IMR-90 (cell line): ENCODE measurements at regions of chr2 and their contacts with region 1.

Region 1: GRCh38 chr2:226799181-226799975 is at the start of gene IRS1:
- DNase-seq: peak; percentile 79
- ATAC-seq: peak; percentile 40
- H3K4me3 ChIP-seq: peak within 1 kb of the TSS; percentile 78
- H3K27ac ChIP-seq: peak within 1 kb of the TSS; percentile 97
- H3K4me1 ChIP-seq: peaks cover 2% of the 10 kb centered on the region; the same call in 1 of the 2 replicates
- H3K27me3 ChIP-seq: no peaks in the 10 kb centered on the region
- CTCF ChIP-seq: peak; percentile 62
- POLR2A ChIP-seq: no peak
- RAD21 ChIP-seq: peak; percentile 53
- total RNA-seq, gene IRS1: 21.1 and 29.4 TPM in 2 replicates

Region 2: DNA sequence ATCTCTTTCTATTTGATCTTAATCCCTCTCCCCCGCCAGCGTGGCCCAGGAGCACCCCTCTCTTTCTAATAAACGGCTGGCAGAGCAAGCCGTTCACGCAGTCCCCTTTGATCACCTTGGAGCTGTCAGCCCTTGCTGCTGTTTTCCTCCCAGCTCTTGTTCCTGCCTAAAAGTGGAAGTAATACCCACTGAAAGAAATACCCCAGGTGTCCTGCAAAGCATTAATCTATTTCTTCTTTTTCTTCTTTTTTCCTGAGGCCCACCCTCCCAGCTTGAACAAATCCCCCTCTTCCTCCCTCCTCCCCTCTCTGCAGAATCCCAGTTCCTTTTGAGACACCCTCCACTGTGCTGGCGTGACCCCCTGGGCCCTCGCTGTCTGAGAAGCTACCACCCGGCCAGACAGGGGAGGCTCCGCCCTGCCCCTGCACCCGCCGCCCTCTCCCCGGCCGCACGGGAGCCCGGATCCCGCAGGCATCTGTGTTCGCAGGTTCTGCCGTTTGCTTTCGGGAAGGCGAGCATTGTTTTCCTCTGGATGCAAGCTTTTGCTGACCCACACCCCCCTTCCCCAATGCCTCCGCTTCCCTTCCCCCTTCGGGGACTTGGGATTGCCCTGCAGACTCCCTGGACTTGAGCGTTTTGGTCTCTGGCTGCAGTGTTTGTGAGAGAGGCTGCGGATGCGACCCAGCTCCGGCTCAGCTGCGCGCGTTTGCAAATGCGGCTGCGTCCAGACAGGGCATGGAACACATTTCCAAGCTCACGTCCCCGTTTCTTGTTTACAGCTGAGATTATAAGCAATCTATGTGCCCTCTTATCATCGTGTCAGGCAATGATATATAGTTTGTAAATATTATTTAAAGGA is 768.4 kb before region 1 on chr2:
- CTCF ChIA-PET with region 1: interaction called, 3 read pairs
- POLR2A ChIA-PET with region 1: no interaction called
- dilution Hi-C with region 1: no loop called
- in situ Hi-C with region 1: no loop called
- intact Hi-C with region 1: loop called (anchors 2 kb)
- DNase-seq: peak; percentile 69
- ATAC-seq: peak; percentile 92
- H3K4me3 ChIP-seq: peak overlapping the region; percentile 52
- H3K27ac ChIP-seq: peak overlapping the region; percentile 89
- H3K4me1 ChIP-seq: peaks cover 6% of the 10 kb centered on the region
- H3K27me3 ChIP-seq: no peaks in the 10 kb centered on the region
- CTCF ChIP-seq: no peak
- POLR2A ChIP-seq: no peak
- RAD21 ChIP-seq: peak; percentile 33

Region 3: DNA sequence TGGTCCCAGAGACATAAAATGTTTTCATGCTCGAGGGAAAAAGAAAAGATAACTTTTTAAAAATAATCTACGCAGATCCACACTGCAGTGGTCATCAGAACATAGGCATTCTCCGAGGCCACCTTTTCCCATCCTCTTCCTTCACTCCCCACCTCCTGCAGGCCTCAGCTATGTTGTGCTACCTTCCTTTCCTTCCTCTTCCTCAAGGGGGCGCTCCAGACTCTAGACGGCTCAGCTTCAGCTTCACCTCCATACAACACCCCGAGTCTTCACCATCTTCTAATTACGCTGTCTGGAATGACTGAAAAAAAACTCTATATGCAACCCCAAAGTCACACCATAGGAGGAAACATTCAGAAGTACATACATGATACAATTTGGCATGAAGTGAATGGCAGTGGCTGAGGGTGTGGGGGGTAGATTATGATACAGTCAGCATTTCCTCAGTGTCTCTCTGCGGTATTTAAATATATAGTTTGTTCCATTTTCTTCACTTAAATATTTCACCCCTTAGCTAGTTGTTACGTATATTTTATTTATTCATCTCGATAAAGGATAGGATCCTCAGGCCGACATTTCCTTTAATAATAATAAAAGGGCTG is 583.4 kb before region 1 on chr2:
- CTCF ChIA-PET with region 1: interaction called, 3 read pairs
- POLR2A ChIA-PET with region 1: interaction called, 3 read pairs
- dilution Hi-C with region 1: no loop called
- in situ Hi-C with region 1: no loop called
- intact Hi-C with region 1: loop called (anchors 1 kb)
- DNase-seq: peak; percentile 54
- ATAC-seq: peak; percentile 64
- H3K4me3 ChIP-seq: no peak overlapping the region
- H3K27ac ChIP-seq: no peak overlapping the region
- H3K4me1 ChIP-seq: peaks cover 8% of the 10 kb centered on the region
- H3K27me3 ChIP-seq: no peaks in the 10 kb centered on the region
- CTCF ChIP-seq: peak; percentile 68
- POLR2A ChIP-seq: no peak
- RAD21 ChIP-seq: peak; percentile 74

Region 4: GRCh38 chr2:226733189-226733858 is 66.1 kb before region 1 on chr2:
- CTCF ChIA-PET with region 1: interaction called, 3 read pairs
- POLR2A ChIA-PET with region 1: interaction called, 11 read pairs
- dilution Hi-C with region 1: no loop called
- in situ Hi-C with region 1: no loop called
- intact Hi-C with region 1: no loop called
- DNase-seq: no peak
- ATAC-seq: no peak
- H3K4me3 ChIP-seq: no peak overlapping the region
- H3K27ac ChIP-seq: no peak overlapping the region
- H3K4me1 ChIP-seq: peaks cover 9% of the 10 kb centered on the region
- H3K27me3 ChIP-seq: no peaks in the 10 kb centered on the region
- CTCF ChIP-seq: no peak
- POLR2A ChIP-seq: no peak
- RAD21 ChIP-seq: no peak

Region 5: GRCh38 chr2:226984750-226985582 is 185.6 kb after region 1 on chr2:
- CTCF ChIA-PET with region 1: interaction called, 7 read pairs
- POLR2A ChIA-PET with region 1: interaction called, 6 read pairs
- dilution Hi-C with region 1: no loop called
- in situ Hi-C with region 1: no loop called
- intact Hi-C with region 1: loop called (anchors 1 kb)
- DNase-seq: peak; percentile 83
- ATAC-seq: peak; percentile 92
- H3K4me3 ChIP-seq: no peak overlapping the region
- H3K27ac ChIP-seq: no peak overlapping the region
- H3K4me1 ChIP-seq: 0 out of 2 replicates have a peak, but pooled peaks cover 4% of the 10 kb centered on the region
- H3K27me3 ChIP-seq: no peaks in the 10 kb centered on the region
- CTCF ChIP-seq: peak; percentile 86
- POLR2A ChIP-seq: 0 out of 2 replicates have a peak, but pooled peaks have one; percentile 24
- RAD21 ChIP-seq: peak; percentile 92

Region 6: GRCh38 chr2:227154986-227155774 is 355.8 kb after region 1 on chr2:
- CTCF ChIA-PET with region 1: no interaction called
- POLR2A ChIA-PET with region 1: no interaction called
- dilution Hi-C with region 1: no loop called
- in situ Hi-C with region 1: no loop called
- intact Hi-C with region 1: no loop called
- DNase-seq: peak; percentile 28
- ATAC-seq: no peak
- H3K4me3 ChIP-seq: no peak overlapping the region
- H3K27ac ChIP-seq: no peak overlapping the region
- H3K4me1 ChIP-seq: no peaks in the 10 kb centered on the region
- H3K27me3 ChIP-seq: peaks cover 2% of the 10 kb centered on the region
- CTCF ChIP-seq: no peak
- POLR2A ChIP-seq: no peak
- RAD21 ChIP-seq: no peak